Posterior vena cava (tissue), 2 donors: ENCODE measurements at regions of chr1 and their contacts with region 1.

Region 1: DNA sequence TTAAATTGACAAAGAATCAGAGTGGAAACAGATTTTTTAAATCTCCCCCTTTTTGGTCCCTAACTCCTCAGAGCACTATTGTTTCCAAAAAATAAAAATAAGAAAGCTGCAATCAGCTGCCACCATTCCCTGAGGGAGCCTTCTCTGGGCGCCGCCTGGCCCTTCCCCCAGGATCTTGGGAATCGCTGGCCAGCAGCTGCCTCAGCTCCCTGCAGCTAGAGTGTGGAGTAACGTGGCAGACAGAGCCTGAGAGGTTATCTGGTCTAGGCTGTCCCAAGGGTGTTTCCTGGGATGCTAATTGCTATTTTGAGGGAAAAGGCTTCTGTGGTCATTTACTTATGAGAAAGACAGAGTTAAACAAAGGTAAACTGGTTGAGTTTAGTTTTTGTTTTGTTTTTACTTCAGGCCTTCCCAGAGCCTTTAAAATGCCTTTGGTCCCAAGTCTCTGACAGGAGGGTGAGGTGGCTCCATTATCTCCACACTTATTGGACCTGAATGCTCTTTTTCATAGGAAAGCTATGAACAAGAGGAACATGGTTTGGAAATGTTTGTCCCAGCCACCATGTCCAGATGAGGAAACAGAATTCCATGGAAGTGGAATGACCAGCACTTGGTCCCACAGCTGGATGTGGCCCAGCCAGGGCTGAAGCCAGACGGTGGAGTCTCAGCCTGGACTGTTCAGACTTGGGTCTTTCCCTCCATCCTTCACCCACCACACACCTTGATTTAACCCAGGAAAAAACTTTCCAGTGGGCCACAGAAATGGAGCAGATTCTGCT is 14.1 kb upstream of the KIAA1614 start:
- DNase-seq: no peak

Region 2: DNA sequence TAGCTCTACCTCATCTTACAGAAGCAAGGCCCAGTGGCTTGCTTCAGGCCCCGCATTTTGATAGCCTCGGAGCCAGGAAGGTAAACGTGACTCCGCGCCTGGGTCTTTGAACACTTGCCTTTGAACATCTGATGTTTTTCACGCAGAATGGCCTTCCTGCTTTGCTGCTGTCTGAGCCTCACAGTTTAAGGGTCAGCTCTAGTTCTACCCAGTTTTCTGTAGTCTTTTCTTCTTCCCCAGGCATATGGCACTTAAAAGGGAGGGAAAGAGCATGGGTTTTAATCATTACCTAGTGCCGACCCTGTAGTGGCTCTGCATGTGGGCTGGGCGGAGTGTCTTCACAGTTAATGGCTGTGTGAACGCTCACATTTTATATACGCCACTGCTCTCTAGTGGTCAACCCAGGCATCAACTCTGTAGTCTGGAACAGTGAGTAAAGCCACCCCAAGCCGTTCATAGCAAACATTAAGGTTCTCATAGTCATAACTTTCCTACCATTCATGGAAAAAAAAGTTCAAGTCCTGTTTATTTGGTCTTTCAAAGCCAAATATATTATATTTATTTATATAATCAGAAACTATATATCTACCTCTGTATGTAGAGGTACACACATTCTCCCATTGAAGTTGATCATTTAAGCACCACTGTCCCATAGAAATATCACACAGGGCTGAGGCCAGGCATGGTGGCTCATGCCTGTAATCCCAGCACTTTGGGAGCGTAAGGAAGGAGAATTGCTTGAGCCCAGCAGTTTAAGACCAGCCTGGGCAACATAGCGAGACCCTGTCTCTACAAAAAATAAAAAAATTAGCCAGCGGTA is 268.0 kb after region 1 on chr1:
- intact Hi-C with region 1: loop called in 1 of 2 experiments (anchors 10 kb)
- DNase-seq: no peak